Right ventricle myocardium superior (tissue), 1 donor: ENCODE measurements at regions of chr17 and their contacts with region 1.

Region 1: DNA sequence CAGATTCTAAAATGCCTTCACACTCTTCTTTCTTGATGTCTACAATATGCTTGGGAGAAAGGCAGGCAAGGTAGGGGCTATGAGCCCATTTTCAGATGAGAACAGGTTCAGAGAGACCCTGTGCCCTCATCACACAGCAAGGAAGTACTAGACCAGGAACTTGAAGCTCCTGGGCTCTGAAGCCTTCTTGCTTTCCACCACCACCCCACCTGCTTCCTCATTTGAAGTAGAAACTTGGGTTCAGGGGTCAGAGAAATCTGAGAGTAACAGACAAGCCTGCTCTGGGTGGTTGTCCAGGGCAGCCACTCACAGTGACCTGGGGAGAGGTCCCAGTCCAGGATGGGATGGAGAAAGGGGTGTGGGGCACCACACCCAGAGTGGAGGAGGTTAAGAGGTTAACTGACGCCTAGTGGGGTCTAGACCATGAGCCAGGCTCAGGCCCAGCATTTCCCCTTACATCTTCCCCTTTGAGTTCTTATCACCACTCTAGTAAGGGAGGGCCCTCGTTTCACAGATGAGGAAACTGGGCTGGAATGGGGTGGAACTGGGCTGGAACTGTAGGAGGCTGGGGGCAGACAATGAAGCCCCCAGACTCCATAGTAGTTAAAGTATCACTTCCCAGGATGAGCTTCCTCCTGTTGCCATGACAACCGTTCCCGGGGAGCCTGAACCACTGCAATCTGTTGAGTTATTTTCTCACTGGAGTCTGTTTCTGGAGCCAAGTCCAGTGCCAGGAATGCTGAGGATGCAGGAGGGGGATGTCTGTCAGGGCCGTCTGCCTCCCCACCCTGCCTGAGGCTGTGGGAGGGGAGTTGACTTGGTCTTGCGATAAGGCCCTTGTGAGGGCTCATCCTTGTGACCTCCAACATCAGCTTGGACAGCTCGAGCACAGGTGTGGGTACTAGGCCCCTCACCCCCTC is 16.2 kb upstream of the PHF12 start:
- DNase-seq: peak; percentile 33
- ATAC-seq: no peak

Region 2: DNA sequence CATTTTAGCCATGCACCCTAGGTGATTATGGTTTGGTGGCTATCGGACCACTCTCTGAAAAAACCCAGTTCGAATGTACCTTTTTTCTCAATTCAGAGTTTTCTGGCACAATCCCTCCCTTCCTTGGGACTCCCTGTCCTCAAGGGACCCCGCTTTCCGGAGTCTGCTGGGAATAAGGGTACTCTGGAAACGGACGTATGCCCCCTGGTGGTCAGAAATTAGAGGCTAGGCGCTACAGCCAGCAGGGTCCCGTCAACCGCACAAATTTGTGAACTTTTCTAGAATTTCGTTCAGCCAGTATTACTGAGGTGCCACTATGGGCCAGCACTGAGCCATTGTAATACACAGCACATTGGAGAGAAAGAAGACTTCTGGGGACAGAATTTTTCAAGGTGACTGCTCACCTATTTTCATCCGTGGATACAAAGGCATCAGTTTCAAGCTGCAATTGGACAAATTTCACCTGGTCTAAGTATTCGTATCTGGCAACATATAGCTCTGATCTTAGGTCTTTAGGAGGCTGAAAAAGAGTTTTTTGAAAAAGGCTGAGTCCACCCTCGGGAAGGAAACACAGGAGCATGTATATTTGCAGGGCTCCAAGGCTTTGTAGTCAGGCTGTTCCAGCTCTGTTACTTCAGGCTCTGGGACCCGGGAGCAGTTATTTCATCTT is 252.0 kb after region 1 on chr17:
- intact Hi-C with region 1: loop called (anchors 10 kb)
- DNase-seq: peak; percentile 77
- ATAC-seq: peak; percentile 92